B cell (primary cell): ENCODE measurements at regions of chr2 and their contacts with region 1.

Region 1: GRCh38 chr2:113858764-113859163 is 31.1 kb upstream of the ACTR3 start:
- DNase-seq: no peak
- ATAC-seq: no peak
- H3K4me3 ChIP-seq: peak overlapping the region in 1 of 5 experiments; percentile 44
- H3K4me3 Mint-ChIP-seq: peak overlapping the region; percentile 35
- H3K27ac ChIP-seq: peak overlapping the region; percentile 89 to 96
- H3K27ac Mint-ChIP-seq: peak overlapping the region; percentile 70
- H3K4me1 ChIP-seq: peaks cover 83 to 88% of the 10 kb centered on the region in 2 donors
- H3K4me1 Mint-ChIP-seq: peaks cover 84% of the 10 kb centered on the region
- H3K27me3 ChIP-seq: no peaks in the 10 kb centered on the region
- H3K27me3 Mint-ChIP-seq: no peaks in the 10 kb centered on the region
- CTCF ChIP-seq: no peak

Region 2: DNA sequence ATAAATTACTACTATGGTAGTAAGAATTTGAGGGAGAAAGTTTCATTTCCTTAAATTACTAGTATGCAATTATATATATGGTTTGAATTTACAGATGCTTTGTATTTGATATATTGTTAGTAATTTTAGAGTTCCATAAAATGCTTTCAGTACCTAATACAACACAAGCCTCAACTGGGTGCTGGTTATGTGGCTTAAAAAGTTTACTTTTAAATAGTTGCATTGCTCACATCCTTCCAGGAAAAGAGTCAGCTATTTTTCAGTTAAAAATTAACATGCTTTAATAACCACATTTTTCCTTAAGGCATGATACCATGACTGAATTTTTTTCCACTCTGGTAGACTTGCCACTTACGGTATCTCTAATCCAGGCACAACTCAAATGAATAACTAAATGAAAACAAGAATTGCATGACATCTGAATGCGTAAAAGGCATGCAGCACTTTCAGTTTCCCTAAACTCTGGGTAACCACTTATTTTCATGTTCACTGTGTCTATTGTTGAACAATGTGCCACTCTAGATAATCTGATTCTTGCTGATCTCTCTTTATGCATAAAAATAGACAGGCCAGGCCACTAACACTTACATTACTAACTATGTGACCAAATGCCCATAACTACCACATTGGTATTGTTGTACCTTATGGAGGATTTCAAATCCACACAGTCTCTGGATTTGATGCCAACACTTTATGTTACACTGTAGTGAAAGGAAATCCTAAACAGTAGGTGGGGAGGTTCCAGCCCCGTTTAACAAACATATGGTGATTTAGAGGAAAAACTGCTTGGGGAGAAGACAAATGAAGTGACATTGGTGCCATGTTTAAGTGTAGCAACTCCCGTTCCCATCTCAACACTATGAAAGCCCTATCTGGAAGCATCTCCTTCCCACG is 66.8 kb before region 1 on chr2:
- CTCF ChIA-PET with region 1: no interaction called
- POLR2A ChIA-PET with region 1: no interaction called
- intact Hi-C with region 1: loop called (anchors 5 kb)
- DNase-seq: peak; percentile 43
- ATAC-seq: peak; percentile 41
- H3K4me3 ChIP-seq: peak overlapping the region in 3 of 5 experiments; percentile 23 to 60 (median 33)
- H3K4me3 Mint-ChIP-seq: peak overlapping the region; percentile 63
- H3K27ac ChIP-seq: peak overlapping the region in 1 of 2 donors; percentile 27
- H3K27ac Mint-ChIP-seq: peak overlapping the region; percentile 43
- H3K4me1 ChIP-seq: peaks cover 19 to 23% of the 10 kb centered on the region in 2 donors
- H3K4me1 Mint-ChIP-seq: peaks cover 18% of the 10 kb centered on the region
- H3K27me3 ChIP-seq: no peaks in the 10 kb centered on the region
- H3K27me3 Mint-ChIP-seq: no peaks in the 10 kb centered on the region
- CTCF ChIP-seq: no peak

Region 3: DNA sequence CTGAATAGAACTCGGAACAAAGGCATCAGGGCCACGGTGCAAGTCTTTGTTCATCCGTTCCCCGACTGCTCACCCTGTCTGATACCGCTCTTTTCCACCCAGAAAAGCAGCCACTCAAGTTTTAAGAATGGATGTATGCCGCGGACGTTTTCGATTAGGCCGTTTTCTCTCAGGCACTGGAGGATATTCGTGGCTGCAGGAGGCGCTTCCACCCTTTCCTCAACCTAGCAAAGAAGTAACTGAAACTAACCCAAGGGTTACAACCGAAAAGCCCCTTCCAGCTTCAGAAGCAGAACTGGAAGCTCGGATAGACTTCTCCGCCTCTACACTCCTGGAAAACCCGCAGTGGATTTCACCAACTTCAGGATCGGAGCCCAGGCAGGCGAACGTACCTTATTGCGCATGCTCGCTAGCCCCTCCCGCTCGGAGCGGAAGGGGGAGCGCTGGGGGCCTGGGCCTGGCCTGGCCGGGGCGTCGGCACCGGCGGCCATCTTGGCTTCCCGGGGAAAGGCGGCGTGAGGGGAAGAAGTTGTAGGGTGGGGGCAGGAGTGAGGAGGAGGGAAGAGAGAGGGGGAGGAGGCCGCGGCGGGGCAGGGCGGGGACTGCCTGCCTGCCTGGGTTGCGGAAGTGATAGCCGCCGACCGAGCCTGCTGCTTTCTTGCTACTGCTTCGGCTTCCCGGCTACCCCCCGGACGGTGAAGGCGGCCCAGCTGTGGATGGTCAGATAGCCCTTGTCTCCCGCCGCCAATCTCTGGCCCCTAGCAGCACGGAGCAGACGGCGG is 30.9 kb after region 1 on chr2 and contains the start of gene ACTR3:
- CTCF ChIA-PET with region 1: interaction called, 3 read pairs
- POLR2A ChIA-PET with region 1: interaction called, 23 read pairs
- intact Hi-C with region 1: loop called (anchors 1 kb)
- DNase-seq: peak; percentile 100
- ATAC-seq: peak; percentile 82
- H3K4me3 ChIP-seq: peak within 1 kb of the TSS; percentile 79 to 96 (median 93)
- H3K4me3 Mint-ChIP-seq: peak within 1 kb of the TSS; percentile 99
- H3K27ac ChIP-seq: peak within 1 kb of the TSS; percentile 94 to 98
- H3K27ac Mint-ChIP-seq: peak within 1 kb of the TSS; percentile 98
- H3K4me1 ChIP-seq: peaks cover 63 to 66% of the 10 kb centered on the region in 2 donors
- H3K4me1 Mint-ChIP-seq: peaks cover 79% of the 10 kb centered on the region
- H3K27me3 ChIP-seq: no peaks in the 10 kb centered on the region
- H3K27me3 Mint-ChIP-seq: no peaks in the 10 kb centered on the region
- CTCF ChIP-seq: peak; percentile 16
- total RNA-seq, gene ACTR3: 240 and 249 TPM in 2 replicates

Region 4: DNA sequence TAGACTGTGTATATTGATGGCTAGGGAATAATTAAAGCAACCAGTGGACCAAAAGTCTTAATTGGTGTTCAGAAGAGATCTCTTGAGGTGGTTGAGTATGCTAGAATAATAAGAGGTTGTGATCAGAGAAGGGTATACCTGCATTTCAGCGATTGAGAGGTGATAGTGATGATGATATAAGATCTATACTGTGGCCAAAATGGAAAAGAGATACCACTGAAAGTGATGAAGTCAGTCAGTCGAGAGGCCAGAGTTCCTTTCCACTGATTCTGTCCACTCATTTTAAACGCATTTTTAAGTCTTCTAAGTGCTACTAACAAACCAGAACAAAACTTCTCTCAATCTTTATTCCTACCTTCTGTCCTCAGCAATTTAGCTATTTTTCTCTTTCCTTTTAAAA is 64.0 kb after region 1 on chr2:
- CTCF ChIA-PET with region 1: no interaction called
- POLR2A ChIA-PET with region 1: no interaction called
- intact Hi-C with region 1: loop called (anchors 2 kb)
- DNase-seq: no peak
- ATAC-seq: no peak
- H3K4me3 ChIP-seq: no peak overlapping the region
- H3K4me3 Mint-ChIP-seq: no peak overlapping the region
- H3K27ac ChIP-seq: peak overlapping the region; percentile 19 to 78
- H3K27ac Mint-ChIP-seq: no peak overlapping the region
- H3K4me1 ChIP-seq: peaks cover 27 to 39% of the 10 kb centered on the region in 2 donors
- H3K4me1 Mint-ChIP-seq: peaks cover 35% of the 10 kb centered on the region
- H3K27me3 ChIP-seq: no peaks in the 10 kb centered on the region
- H3K27me3 Mint-ChIP-seq: no peaks in the 10 kb centered on the region
- CTCF ChIP-seq: no peak